ENCODE measurements at regions of chr7 and their contacts with region 1.

Region 1: GRCh38 chr7:155506854-155507337 is 39.5 kb downstream of the CNPY1 start:
- DNase-seq: peak; percentile 53
- ATAC-seq: peak; percentile 58
- H3K4me3 Mint-ChIP-seq: no peak overlapping the region
- H3K27ac Mint-ChIP-seq: no peak overlapping the region
- H3K4me1 Mint-ChIP-seq: peaks cover 24% of the 10 kb centered on the region
- H3K27me3 Mint-ChIP-seq: peaks cover 77% of the 10 kb centered on the region

Region 2: GRCh38 chr7:155380221-155380861 is 126.6 kb before region 1 on chr7:
- CTCF ChIA-PET with region 1: no interaction called
- POLR2A ChIA-PET with region 1: no interaction called
- intact Hi-C with region 1: loop called (anchors 1 to 2 kb)
- DNase-seq: peak; percentile 89
- ATAC-seq: peak; percentile 94
- H3K4me3 Mint-ChIP-seq: no peak overlapping the region
- H3K27ac Mint-ChIP-seq: no peak overlapping the region
- H3K4me1 Mint-ChIP-seq: peaks cover 23% of the 10 kb centered on the region
- H3K27me3 Mint-ChIP-seq: peaks cover 79% of the 10 kb centered on the region

Region 3: GRCh38 chr7:155466814-155467733 is 39.8 kb before region 1 on chr7:
- CTCF ChIA-PET with region 1: no interaction called
- POLR2A ChIA-PET with region 1: no interaction called
- intact Hi-C with region 1: loop called (anchors 1 to 2 kb)
- DNase-seq: peak; percentile 81
- ATAC-seq: peak; percentile 70
- H3K4me3 Mint-ChIP-seq: no peak overlapping the region
- H3K27ac Mint-ChIP-seq: no peak overlapping the region
- H3K4me1 Mint-ChIP-seq: peaks cover 11% of the 10 kb centered on the region
- H3K27me3 Mint-ChIP-seq: peaks cover 76% of the 10 kb centered on the region

Region 4: GRCh38 chr7:155738652-155739537 is 232.0 kb after region 1 on chr7:
- CTCF ChIA-PET with region 1: no interaction called
- POLR2A ChIA-PET with region 1: no interaction called
- intact Hi-C with region 1: loop called in 1 of 2 experiments (anchors 5 kb)
- DNase-seq: peak; percentile 85
- ATAC-seq: peak; percentile 68
- H3K4me3 Mint-ChIP-seq: peak overlapping the region; percentile 21
- H3K27ac Mint-ChIP-seq: peak overlapping the region; percentile 72
- H3K4me1 Mint-ChIP-seq: peaks cover 64% of the 10 kb centered on the region
- H3K27me3 Mint-ChIP-seq: no peaks in the 10 kb centered on the region

Region 5: DNA sequence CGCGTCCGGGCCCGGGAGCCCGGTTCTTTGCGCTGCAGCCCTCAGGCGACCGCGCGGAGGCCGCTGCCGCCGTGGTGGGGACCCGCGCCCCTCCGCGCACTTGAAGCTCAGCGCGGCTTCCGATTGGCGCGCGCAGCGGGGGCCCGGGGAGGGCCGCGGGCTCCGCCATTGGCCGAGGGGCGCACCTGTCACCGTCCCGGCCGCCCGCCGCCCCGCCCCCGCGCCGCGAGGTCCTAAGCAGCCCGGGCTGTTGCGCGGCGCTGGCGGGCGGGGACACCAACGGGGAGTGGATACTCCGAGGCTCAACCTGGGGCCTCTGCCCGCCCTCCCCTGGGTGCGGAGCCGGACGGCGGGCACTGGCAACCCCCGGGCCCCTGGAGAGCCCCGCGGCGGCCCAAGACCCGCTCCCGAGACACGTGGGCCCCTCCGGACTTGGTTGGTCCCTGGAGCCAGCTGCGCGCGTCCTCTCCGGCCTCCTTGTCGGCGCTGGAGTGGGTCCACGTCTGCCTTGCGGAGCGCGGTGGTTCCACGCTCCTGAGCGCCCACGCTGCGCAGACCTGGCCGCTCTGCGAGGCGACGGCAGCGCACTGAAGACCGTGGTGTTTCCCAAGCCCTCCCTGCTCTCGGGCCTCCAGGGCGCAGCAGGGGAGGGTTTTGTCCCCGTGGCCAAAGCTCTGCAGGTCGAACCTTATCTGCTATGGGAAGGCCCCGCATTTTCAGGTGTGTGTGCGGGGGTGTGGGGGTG is 1503.9 kb after region 1 on chr7 and contains the start of gene MNX1:
- CTCF ChIA-PET with region 1: no interaction called
- POLR2A ChIA-PET with region 1: no interaction called
- intact Hi-C with region 1: loop called in 1 of 2 experiments (anchors 5 kb)
- DNase-seq: peak; percentile 73
- ATAC-seq: peak; percentile 83
- H3K4me3 Mint-ChIP-seq: peak within 1 kb of the TSS; percentile 39
- H3K27ac Mint-ChIP-seq: no peak within 1 kb of the TSS
- H3K4me1 Mint-ChIP-seq: peaks cover 15% of the 10 kb centered on the region
- H3K27me3 Mint-ChIP-seq: peaks cover 69% of the 10 kb centered on the region
- total RNA-seq, gene MNX1: not detected